ENCODE measurements at regions of chr16 and their contacts with region 1.

Region 1: DNA sequence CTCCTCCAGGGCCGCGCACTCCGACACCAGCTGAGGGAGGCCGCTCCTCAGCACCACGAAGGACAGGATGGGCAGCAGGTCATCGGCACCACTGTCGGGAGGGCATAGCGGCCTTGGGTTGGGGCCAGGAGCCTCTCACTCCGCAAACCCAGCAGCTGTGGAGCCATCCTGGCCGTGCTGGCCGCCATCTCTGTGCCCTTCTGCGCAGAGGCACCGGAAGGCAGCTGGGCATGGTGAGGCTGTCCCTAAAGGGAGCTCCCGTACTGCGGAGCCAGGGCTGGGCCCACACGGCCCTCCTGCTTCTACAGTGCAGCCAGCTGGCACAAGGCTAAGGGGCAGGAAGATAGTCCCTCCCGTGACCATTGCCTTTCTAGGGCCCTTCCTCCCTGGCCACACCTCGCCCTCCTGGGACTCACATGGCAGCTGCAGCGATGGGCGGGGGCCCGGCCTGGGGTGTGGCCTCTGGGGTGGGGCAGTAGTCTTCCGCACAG is 7.0 kb upstream of the SPATA2L start:
- DNase-seq: peak in 1 of 2 donors; percentile 37
- ATAC-seq: no peak
- H3K4me3 ChIP-seq: no peak overlapping the region
- H3K27ac ChIP-seq: no peak overlapping the region
- H3K4me1 ChIP-seq: no peaks in the 10 kb centered on the region
- H3K27me3 ChIP-seq: no peaks in the 10 kb centered on the region

Region 2: GRCh38 chr16:89791278-89791995 is 83.0 kb after region 1 on chr16:
- intact Hi-C with region 1: loop called in 1 of 2 experiments (anchors 5 kb)
- DNase-seq: no peak
- ATAC-seq: no peak
- H3K4me3 ChIP-seq: no peak overlapping the region
- H3K27ac ChIP-seq: no peak overlapping the region
- H3K4me1 ChIP-seq: no peaks in the 10 kb centered on the region
- H3K27me3 ChIP-seq: no peaks in the 10 kb centered on the region

Measured in aorta (tissue), 5 donors.